ENCODE measurements at regions of chr5 and their contacts with region 1.

Region 1: GRCh38 chr5:181028032-181028819 is 11.8 kb upstream of the BTNL9 start:
- DNase-seq: peak; percentile 80 to 97 (median 84)
- ATAC-seq: peak; percentile 93
- H3K4me3 ChIP-seq: peak overlapping the region; percentile 48
- H3K27ac ChIP-seq: peak overlapping the region; percentile 84
- H3K4me1 ChIP-seq: peaks cover 8 to 9% of the 10 kb centered on the region in 2 experiments; a peak in 4 of 5 replicates
- H3K27me3 ChIP-seq: no peaks in the 10 kb centered on the region
- CTCF ChIP-seq: no peak
- EP300 ChIP-seq: peak; percentile 51
- POLR2A ChIP-seq: peak; percentile 99
- RAD21 ChIP-seq: peak in 1 of 2 experiments; percentile 20; a peak in 2 of 4 replicates

Region 2: DNA sequence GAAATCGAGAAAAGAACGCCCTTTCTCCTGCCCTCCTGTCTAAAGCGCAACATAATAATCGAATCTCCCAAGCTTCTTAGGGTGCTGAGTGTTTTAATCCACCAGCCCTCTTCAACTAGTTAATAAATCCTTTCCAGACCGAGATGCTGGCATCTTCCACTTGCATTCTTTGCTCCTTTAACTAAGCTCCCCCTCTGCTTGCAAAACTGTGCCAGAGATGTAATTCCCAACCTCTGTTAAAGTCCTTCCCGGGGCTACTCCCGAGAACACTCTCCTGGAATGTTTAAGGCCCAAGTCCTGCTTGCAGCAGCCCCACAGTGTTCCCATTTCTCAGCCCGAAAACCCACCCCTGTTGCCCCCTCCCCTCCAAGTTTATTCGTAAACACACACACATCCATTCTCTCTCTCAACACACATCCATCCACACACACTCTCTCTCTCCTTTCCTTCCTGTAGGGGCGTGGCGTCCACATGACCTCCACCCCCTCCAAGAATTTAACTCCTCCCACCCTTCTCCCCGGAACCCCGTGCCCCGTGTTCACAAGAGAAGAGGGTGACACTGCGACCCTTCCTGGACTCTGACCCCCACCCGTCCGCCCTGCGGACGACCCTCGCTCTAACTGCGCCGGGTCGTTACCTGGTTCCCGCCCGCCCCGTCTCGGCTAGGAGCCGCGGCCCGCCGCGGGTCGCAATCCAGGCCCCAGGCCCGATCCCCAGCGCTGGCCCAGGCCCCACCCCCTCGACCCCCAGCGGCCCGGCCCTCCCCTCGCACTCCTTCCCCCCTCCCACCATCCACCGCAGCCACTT is 218.6 kb before region 1 on chr5:
- CTCF ChIA-PET with region 1: no interaction called
- POLR2A ChIA-PET with region 1: no interaction called
- in situ Hi-C with region 1: no loop called
- intact Hi-C with region 1: loop called (anchors 10 kb)
- DNase-seq: peak; percentile 90 to 96 (median 93)
- ATAC-seq: peak; percentile 84
- H3K4me3 ChIP-seq: peak overlapping the region; percentile 68
- H3K27ac ChIP-seq: peak overlapping the region; percentile 99
- H3K4me1 ChIP-seq: peaks cover 49 to 60% of the 10 kb centered on the region in 2 experiments
- H3K27me3 ChIP-seq: no peaks in the 10 kb centered on the region
- CTCF ChIP-seq: no peak
- EP300 ChIP-seq: no peak
- POLR2A ChIP-seq: peak; percentile 51; the same call in 1 of the 2 replicates
- RAD21 ChIP-seq: no peak

Region 3: DNA sequence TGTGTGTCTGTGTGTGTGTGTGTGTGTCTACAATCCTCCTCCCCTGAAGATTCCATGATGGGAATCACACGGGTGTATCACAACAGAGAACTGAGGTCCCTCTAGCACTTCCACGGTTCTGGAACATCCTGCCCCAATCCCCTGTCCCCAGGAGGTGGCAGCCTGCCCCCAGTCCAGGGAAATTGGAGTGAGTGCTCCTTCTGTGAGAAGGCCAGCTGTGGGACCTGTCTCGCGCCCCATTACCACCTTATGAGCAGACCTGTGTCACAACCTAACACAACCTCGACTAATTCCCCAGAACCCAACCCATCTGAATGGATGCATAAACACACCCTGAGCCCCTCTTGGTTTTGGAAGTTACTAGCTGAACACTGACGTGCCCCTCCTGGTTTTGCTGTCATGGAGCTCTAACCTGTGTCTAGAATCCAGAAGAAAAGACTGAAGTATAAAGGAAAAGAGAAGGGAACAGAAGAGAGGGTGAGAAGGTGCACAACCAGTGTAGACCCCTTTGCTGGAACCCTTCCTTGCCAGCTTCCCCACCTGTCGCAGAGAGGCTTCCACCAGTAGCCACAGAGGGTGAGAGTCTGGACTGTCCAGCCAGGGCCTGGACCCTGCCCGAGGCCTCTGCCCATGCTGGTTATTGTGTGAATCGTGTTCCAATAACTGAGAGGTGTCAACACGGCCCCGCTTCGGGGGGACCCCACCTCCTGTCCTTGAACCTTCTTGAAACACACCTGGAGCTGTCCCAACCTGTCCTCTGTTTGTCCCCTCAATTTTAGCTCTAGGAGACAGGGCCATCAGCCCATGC is 15.3 kb after region 1 on chr5:
- CTCF ChIA-PET with region 1: interaction called, 3 read pairs
- POLR2A ChIA-PET with region 1: interaction called, 10 read pairs
- in situ Hi-C with region 1: no loop called
- intact Hi-C with region 1: no loop called
- DNase-seq: peak; percentile 31 to 69 (median 52)
- ATAC-seq: peak; percentile 78
- H3K4me3 ChIP-seq: no peak overlapping the region
- H3K27ac ChIP-seq: no peak overlapping the region
- H3K4me1 ChIP-seq: peaks cover 9 to 29% of the 10 kb centered on the region in 2 experiments; a peak in 4 of 5 replicates
- H3K27me3 ChIP-seq: peaks cover 0 to 4% of the 10 kb centered on the region in 2 experiments; a peak in 2 of 5 replicates
- CTCF ChIP-seq: peak; percentile 68 to 81 (median 76); a peak in 5 of 6 replicates
- EP300 ChIP-seq: no peak
- POLR2A ChIP-seq: no peak
- RAD21 ChIP-seq: peak; percentile 53 to 86

Region 4: GRCh38 chr5:181052672-181053487 is 24.7 kb after region 1 on chr5:
- CTCF ChIA-PET with region 1: no interaction called
- POLR2A ChIA-PET with region 1: interaction called, 6 read pairs
- in situ Hi-C with region 1: no loop called
- intact Hi-C with region 1: loop called (anchors 2 kb)
- DNase-seq: peak; percentile 81 to 94 (median 93)
- ATAC-seq: peak; percentile 63
- H3K4me3 ChIP-seq: peak overlapping the region; percentile 84
- H3K27ac ChIP-seq: peak overlapping the region; percentile 89
- H3K4me1 ChIP-seq: peaks cover 38 to 41% of the 10 kb centered on the region in 2 experiments
- H3K27me3 ChIP-seq: no peaks in the 10 kb centered on the region
- CTCF ChIP-seq: no peak
- EP300 ChIP-seq: no peak
- POLR2A ChIP-seq: peak; percentile 73
- RAD21 ChIP-seq: no peak

Region 5: GRCh38 chr5:181223058-181223728 is 195.0 kb after region 1 on chr5 and contains the start of gene TRIM41:
- CTCF ChIA-PET with region 1: no interaction called
- POLR2A ChIA-PET with region 1: no interaction called
- in situ Hi-C with region 1: no loop called
- intact Hi-C with region 1: no loop called
- DNase-seq: peak; percentile 81 to 99 (median 86)
- ATAC-seq: peak; percentile 79
- H3K4me3 ChIP-seq: peak within 1 kb of the TSS; percentile 86
- H3K27ac ChIP-seq: peak within 1 kb of the TSS; percentile 90
- H3K4me1 ChIP-seq: peaks cover 0 to 42% of the 10 kb centered on the region in 2 experiments; a peak in 4 of 5 replicates
- H3K27me3 ChIP-seq: no peaks in the 10 kb centered on the region
- CTCF ChIP-seq: peak; percentile 7 to 44 (median 29); a peak in 3 of 6 replicates
- EP300 ChIP-seq: peak; percentile 63; the same call in 1 of the 2 replicates
- POLR2A ChIP-seq: peak; percentile 98
- RAD21 ChIP-seq: no peak
- polyA plus RNA-seq, gene TRIM41: 1.8 to 2.1 TPM